Esophagus muscularis mucosa (tissue), 4 donors: ENCODE measurements at regions of chr15 and their contacts with region 1.

Region 1: DNA sequence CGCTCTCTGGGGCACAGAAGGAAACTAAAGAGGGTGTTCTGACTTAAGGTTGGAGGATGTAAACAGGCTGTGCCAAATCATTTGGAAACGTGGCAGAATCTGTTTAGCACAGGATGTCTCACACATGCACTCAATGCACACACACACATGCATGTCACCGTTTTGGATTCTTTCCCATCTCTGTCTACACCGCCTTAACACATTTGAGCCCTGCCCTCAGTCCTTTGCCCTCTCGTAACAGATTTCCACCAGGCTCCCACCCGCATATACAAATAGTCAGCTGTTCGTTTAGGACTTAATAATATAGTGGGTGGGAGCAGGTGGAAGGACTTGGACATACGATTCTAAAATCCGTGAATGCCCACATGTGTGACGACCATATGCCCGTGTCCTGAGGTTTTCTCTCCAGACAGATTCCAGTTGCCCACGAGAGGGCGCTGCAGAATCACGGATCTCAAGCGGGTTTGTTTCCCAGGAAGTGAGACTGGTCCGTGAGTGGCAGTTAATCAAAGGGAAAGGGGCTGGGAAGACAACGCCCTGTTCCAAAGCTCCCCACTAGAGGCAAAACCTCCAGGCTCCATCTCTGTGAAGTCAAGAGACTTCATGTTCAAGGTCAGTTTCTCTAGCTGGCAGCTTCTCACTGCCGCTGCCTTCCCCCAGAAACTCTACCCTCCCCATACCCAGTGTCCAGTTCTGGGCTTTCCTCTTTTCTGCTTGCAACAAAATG is 44.5 kb downstream of the NOX5 start:
- DNase-seq: peak; percentile 96
- H3K4me3 ChIP-seq: peak overlapping the region in 1 of 4 donors; percentile 9
- H3K27ac ChIP-seq: no peak overlapping the region
- H3K4me1 ChIP-seq: peaks cover 7 to 11% (median 9%) of the 10 kb centered on the region in 4 donors
- H3K27me3 ChIP-seq: peaks cover 0 to 33% (median 0%) of the 10 kb centered on the region in 4 donors
- CTCF ChIP-seq: peak; percentile 83 to 84 (median 83)
- EP300 ChIP-seq: no peak
- POLR2A ChIP-seq: no peak

Region 2: DNA sequence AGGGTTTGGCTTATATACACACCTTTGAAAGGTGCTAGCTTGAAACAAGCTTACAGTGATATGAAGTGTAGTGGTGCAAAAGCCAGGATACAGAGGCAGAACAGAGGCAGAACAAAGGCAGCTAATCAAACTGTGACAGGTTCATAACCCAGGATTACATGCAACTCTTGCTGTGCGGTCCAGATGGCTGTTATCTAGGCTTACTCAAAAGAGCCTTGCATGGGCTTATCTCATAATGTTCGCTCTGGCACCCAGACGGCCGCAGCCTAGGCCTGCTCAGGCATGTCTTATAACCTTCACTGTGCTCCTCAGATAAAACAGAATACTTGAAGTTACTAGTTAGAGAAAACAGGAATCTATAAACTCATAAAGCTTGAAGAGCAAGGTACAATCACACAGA is 67.3 kb before region 1 on chr15:
- intact Hi-C with region 1: no loop called
- DNase-seq: peak; percentile 82
- H3K4me3 ChIP-seq: no peak overlapping the region
- H3K27ac ChIP-seq: no peak overlapping the region
- H3K4me1 ChIP-seq: peaks cover 0 to 4% (median 0%) of the 10 kb centered on the region in 4 donors
- H3K27me3 ChIP-seq: no peaks in the 10 kb centered on the region
- CTCF ChIP-seq: no peak
- EP300 ChIP-seq: no peak
- POLR2A ChIP-seq: no peak

Region 3: DNA sequence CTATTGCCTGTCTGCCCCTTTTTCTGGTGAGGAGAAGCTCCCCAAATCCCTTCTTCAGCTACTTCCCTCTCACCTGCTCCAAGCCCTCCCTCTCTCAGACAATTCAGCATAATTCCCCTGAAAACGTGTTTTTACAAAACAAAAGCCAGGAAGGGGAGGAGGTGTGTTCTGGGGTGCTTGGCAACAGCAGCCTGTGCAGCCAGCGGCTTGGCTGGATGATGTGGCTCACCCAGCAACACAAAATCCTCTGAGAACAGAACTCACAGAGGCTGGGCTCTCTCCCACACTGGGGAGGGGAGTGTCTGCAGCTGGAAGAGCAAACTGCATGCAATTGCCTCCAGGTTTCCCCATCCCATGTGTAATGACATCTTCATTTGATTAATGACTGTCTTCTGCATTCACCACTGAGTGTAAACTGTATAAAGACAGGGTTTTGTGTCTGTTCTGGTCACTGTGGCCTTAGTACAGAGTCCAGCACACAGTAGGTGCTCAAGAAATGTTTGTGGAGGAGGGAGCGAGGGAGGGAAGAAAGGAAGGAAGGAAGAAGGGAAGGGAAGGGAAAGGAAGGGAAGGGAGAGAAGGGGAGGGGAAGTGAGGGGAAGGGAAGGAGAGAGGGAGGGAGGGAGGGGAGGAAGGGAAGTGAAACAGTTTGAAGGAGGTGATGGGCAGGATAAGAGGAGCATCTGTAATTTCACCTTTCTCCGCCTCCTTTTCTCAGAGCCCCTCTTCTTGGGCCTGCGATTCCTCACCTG is 31.4 kb after region 1 on chr15:
- intact Hi-C with region 1: no loop called
- DNase-seq: no peak
- H3K4me3 ChIP-seq: no peak overlapping the region
- H3K27ac ChIP-seq: no peak overlapping the region
- H3K4me1 ChIP-seq: peaks cover 0 to 8% (median 0%) of the 10 kb centered on the region in 4 donors
- H3K27me3 ChIP-seq: peaks cover 0 to 27% (median 0%) of the 10 kb centered on the region in 4 donors
- CTCF ChIP-seq: no peak
- EP300 ChIP-seq: no peak
- POLR2A ChIP-seq: no peak

Region 4: DNA sequence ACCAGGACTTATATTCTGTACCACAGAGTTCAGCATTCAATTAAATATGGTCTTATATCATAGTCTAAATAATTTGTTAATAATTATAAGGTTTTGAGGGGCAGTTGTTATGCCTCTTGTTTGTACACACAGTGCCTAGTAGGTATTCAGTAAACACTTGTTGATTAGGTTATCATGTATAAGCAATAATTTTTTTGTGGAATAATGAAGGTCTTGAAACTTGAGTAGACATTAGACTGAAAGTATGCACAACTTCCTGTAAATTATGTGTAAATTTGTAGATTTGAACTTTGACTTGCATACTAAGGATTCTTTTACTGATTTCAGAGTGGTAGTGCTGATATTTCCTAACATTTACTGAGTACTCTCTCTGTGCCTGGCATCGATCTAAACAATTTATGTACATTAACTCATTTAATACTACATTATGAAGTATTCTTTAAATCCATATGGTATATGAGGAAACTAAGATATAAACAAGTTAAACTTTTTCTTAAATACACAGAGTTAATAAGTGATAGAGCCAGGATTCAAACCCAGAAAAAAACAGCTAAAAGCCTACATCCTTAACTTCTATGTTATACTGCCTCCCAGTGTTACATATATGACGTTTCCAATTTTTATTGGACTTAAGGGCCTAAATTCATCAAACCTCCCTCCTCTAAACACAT is 166.5 kb after region 1 on chr15:
- intact Hi-C with region 1: loop called (anchors 5 kb)
- DNase-seq: no peak
- H3K4me3 ChIP-seq: no peak overlapping the region
- H3K27ac ChIP-seq: no peak overlapping the region
- H3K4me1 ChIP-seq: no peaks in the 10 kb centered on the region
- H3K27me3 ChIP-seq: no peaks in the 10 kb centered on the region
- CTCF ChIP-seq: peak in 1 of 3 experiments; percentile 16
- EP300 ChIP-seq: no peak
- POLR2A ChIP-seq: no peak

Region 5: GRCh38 chr15:69377216-69377970 is 318.4 kb after region 1 on chr15:
- intact Hi-C with region 1: no loop called
- DNase-seq: no peak
- H3K4me3 ChIP-seq: no peak overlapping the region
- H3K27ac ChIP-seq: no peak overlapping the region
- H3K4me1 ChIP-seq: no peaks in the 10 kb centered on the region
- H3K27me3 ChIP-seq: peaks cover 0 to 8% (median 0%) of the 10 kb centered on the region in 4 donors
- CTCF ChIP-seq: no peak
- EP300 ChIP-seq: no peak
- POLR2A ChIP-seq: no peak

Region 6: DNA sequence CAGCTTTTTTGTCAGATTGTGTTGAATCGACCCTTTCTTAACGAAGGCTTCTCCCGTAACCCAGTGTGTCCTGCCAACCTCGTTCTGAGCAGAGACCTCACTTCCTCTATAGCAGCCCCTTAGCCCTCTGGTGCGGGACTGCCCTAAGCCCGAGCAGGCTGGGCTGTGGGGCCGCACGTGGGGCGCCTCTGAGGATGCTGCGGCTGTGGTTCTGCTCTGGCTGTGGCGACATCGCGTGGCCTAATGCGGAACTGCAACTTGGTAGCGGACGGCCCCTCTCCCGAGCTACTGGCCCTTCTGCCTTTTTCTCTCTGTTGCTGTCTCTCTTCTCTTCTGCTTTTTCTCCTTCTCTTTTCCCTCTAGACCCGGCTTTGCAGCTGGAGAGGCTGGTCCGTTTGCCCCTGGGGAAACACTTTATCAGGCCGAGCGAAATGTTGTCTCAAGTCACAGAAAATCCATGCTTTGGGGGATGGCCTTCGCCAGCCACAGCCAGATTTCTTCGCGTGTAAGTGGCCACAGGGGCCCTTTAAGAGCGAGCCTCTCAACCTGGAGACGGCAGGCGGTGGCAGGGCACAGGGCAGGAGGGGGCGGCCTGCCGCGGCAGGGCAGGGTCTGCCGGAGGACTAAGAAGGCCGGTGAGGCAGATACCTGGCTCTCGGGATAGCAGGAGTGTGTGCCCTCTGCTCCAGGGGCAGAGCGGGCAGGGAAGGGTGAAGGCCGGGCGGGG is 335.7 kb after region 1 on chr15:
- intact Hi-C with region 1: loop called (anchors 1 kb)
- DNase-seq: peak; percentile 94
- H3K4me3 ChIP-seq: peak overlapping the region in 3 of 4 donors; percentile 7 to 38 (median 19)
- H3K27ac ChIP-seq: no peak overlapping the region
- H3K4me1 ChIP-seq: peaks cover 7 to 10% (median 10%) of the 10 kb centered on the region in 4 donors
- H3K27me3 ChIP-seq: peaks cover 0 to 10% (median 0%) of the 10 kb centered on the region in 4 donors
- CTCF ChIP-seq: peak; percentile 90 to 98 (median 97)
- EP300 ChIP-seq: no peak
- POLR2A ChIP-seq: no peak